Esophagus muscularis mucosa (tissue), 4 donors: ENCODE measurements at regions of chr5 and their contacts with region 1.

Region 1: DNA sequence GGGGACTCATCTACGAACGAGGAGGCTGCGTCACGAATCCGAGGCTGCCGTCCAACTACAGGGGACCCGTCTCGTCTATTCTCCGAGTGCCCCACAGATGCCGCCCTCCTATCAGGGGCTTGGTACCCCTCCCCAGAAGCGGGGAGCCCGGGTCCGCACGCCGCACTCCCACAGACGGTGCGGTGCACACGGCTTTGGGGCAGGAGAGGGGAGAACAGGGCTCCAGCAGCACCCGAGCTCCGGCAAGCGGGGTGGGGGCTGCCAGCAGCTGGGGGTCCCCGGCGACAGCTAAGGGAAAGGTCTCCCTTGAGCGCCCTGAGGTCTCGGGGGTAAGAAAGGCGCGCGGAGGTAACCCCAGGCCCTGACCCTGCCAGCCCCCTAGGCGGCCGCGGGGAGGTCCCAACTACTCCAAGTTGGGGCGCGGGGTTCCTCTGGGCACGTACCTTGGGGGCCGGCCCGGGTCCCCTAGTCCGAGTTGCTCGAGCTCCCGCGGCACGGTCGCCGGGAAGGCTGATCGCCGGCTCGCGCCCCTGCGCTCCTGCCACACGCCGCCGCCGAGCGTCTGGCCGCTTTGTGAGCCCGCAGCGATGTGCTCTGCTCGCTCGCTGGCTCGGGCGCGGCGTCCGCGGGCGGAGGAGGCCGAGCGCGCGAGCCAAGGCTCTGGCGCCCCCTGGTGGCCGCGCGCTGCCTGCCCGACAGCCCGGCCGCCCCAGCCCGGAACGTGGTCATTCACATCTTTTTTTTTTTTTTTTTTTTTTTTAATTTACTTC is at the start of gene SPOCK1:
- DNase-seq: peak; percentile 89
- H3K4me3 ChIP-seq: peak within 1 kb of the TSS; percentile 54 to 67 (median 60)
- H3K27ac ChIP-seq: peak within 1 kb of the TSS; percentile 34 to 59 (median 38)
- H3K4me1 ChIP-seq: peaks cover 4 to 13% (median 11%) of the 10 kb centered on the region in 4 donors
- H3K27me3 ChIP-seq: peaks cover 0 to 36% (median 13%) of the 10 kb centered on the region in 4 donors
- CTCF ChIP-seq: peak; percentile 74 to 84 (median 79)
- EP300 ChIP-seq: no peak
- POLR2A ChIP-seq: no peak
- total RNA-seq, gene SPOCK1: 39.0 to 52.4 (median 45.6) TPM

Region 2: DNA sequence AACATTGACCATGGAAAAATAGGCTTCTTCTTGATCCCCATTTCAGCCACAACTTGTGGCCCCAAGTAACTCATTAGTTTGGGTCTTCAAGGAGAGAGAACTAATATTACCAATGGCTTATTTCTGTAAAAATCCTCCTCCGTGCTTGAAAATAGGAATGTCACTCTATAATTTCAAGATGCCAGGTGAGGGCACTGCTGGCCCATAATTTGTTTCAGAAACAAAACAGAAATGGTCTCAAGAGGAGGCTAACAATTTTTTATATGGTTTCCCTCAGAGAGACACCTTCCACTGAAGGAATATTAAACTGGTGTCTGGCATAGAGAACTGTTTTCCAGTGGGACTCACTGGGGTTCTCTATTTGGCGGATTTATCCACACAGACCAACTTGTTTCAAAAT is 696.5 kb before region 1 on chr5:
- intact Hi-C with region 1: loop called (anchors 10 kb)
- DNase-seq: peak; percentile 37
- H3K4me3 ChIP-seq: no peak overlapping the region
- H3K27ac ChIP-seq: no peak overlapping the region
- H3K4me1 ChIP-seq: no peaks in the 10 kb centered on the region
- H3K27me3 ChIP-seq: peaks cover 0 to 2% (median 0%) of the 10 kb centered on the region in 4 donors
- CTCF ChIP-seq: no peak
- EP300 ChIP-seq: no peak
- POLR2A ChIP-seq: no peak

Region 3: DNA sequence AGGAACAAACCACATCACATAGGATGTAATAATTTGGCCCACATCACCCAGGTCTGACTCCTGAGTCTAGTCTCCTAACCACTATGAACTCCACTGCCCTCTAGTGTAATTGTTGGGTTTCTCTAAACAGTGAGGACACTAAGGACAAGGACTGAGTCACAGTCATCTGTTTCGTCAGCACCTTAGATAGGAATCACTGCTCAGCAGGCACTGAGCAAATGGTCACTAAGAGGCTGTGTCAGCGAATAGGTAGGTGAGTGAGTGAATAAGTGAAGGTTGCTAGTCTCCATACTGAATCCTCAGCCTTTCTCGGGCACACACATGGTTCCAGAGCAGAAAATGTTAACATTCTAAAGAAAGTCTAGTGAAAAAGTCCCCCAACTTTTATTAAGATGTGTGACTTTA is 278.4 kb before region 1 on chr5:
- intact Hi-C with region 1: no loop called
- DNase-seq: no peak
- H3K4me3 ChIP-seq: no peak overlapping the region
- H3K27ac ChIP-seq: no peak overlapping the region
- H3K4me1 ChIP-seq: peaks cover 0 to 10% (median 8%) of the 10 kb centered on the region in 4 donors
- H3K27me3 ChIP-seq: no peaks in the 10 kb centered on the region
- CTCF ChIP-seq: peak in 2 of 3 experiments; percentile 21 to 29
- EP300 ChIP-seq: no peak
- POLR2A ChIP-seq: no peak

Region 4: DNA sequence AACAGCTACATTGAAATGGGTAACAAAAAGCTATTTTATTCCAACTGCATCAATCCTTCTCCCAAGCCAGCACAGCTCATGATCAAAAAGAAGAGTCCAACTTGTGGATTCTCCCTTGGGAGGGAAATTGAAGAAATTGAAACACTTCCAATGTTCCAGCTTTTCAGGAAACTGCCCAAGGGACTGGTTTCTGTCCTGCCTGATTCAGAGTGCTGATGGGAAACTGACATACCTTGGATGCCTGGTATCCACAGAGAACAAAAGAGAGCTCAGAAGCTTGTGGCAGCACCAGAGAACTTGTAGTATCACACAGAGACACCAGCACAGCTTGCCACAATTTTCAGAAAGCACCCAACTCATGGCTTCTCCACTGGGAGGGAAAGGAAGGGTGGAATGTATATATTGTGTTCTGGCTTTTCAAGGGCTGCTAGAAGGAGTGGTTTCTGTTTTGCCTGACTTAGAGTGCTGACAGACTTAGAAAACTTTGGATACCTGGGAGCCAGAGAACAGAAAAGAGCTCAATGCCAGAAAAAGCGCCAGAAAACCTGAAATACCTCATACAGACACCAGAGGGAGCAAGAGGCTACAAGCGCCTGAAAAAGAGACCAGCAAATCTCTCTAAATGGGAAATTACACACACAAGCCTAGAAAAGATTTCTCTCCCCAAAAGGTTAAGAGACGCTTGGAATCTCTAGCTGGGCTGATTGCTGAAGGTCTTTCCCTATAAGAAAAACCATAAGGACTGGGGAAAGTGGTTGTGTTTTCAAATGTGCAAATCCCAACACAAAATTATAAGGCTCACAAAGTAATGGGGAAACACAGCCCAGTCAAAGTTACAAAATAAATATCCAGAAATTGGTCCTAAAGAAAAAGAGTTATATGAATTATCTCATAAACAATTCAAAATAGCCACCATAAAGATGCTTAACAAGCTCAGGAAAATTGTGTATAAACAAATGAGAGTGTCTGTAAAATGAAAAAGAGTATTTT is 178.6 kb before region 1 on chr5:
- intact Hi-C with region 1: loop called (anchors 1 kb)
- DNase-seq: no peak
- H3K4me3 ChIP-seq: no peak overlapping the region
- H3K27ac ChIP-seq: no peak overlapping the region
- H3K4me1 ChIP-seq: peaks cover 0 to 9% (median 4%) of the 10 kb centered on the region in 4 donors
- H3K27me3 ChIP-seq: no peaks in the 10 kb centered on the region
- CTCF ChIP-seq: peak; percentile 76 to 84 (median 78)
- EP300 ChIP-seq: no peak
- POLR2A ChIP-seq: no peak

Region 5: GRCh38 chr5:137688210-137688840 is 189.4 kb after region 1 on chr5:
- intact Hi-C with region 1: no loop called
- DNase-seq: no peak
- H3K4me3 ChIP-seq: no peak overlapping the region
- H3K27ac ChIP-seq: no peak overlapping the region
- H3K4me1 ChIP-seq: peaks cover 0 to 2% (median 0%) of the 10 kb centered on the region in 4 donors
- H3K27me3 ChIP-seq: no peaks in the 10 kb centered on the region
- CTCF ChIP-seq: no peak
- EP300 ChIP-seq: no peak
- POLR2A ChIP-seq: no peak